Cardiac septum (tissue), 1 donor: ENCODE measurements at regions of chr1 and their contacts with region 1.

Region 1: DNA sequence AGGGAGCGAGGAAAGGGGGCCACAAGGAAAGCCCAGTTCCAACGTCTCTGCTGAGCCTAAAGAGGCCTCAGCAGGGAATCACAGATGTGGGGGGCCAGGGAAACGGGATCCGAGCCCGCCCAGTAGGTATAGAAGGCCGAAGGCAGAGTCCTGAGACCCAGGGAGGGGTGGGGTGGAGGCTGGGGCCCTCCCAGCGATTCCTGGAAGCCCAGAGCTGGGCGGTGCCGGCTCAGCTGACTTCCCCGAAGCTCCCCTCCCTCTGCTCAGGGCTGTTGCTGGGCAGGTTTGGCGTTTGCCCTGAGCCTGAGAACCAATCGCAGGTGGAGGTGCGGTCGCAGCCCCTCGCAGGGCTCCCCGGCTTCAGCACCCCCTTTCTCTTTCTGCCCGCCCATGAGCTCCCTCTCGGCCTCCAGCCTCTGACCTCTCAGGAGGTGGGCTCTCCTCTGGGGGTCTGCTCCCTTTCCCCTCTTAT is 12.8 kb downstream of the ADAMTSL4 start:
- DNase-seq: peak; percentile 98

Region 2: GRCh38 chr1:150464422-150464826 is 97.6 kb before region 1 on chr1:
- intact Hi-C with region 1: loop called (anchors 5 kb)
- DNase-seq: no peak

Region 3: GRCh38 chr1:150578965-150579798 is 17.2 kb after region 1 on chr1 and contains the start of gene MCL1:
- intact Hi-C with region 1: loop called (anchors 1 kb)
- DNase-seq: peak; percentile 97
- total RNA-seq, gene MCL1: 145 TPM

Region 4: DNA sequence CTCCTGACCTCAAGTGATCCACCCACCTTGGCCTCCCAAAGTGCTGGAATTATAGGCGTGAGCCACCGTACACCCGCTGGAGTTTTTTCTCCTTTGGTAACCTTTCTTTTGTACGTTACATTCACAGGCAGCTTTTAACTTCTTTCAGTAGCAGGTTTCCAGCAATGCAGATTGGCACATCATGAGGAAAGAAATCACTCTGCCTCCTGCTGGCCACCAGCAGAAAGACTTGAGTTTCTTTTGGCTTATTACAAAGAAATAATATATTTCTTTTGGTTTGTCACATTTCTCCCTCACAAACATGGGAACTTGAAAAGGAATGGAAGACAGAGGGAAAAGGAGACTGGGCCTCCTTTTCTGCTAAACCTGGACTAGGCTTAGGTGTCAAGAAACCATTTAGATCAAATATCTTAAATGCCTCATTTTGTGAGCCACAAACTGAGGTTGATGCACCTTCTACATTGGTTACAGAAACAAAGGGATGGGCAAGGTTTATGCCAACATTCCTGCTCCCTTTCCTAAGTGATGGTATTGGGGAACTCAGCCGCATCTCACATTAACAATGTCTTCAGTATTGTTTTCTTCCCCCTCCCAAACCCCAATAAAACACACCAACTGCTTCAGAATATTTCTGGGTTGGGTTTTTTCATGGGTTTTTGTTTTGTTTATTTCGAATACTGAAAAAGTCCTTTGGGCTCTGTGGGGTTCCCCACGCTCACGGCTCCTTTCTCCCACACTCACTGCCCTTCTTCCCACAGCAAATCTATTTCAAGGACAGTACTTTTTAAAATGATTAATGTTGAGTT is 59.7 kb after region 1 on chr1:
- intact Hi-C with region 1: loop called (anchors 1 kb)
- DNase-seq: no peak

Region 5: GRCh38 chr1:150629115-150629928 is 67.3 kb after region 1 on chr1 and contains the start of gene ENSA:
- intact Hi-C with region 1: loop called (anchors 1 kb)
- DNase-seq: peak; percentile 99
- total RNA-seq, gene ENSA: 141 TPM

Region 6: DNA sequence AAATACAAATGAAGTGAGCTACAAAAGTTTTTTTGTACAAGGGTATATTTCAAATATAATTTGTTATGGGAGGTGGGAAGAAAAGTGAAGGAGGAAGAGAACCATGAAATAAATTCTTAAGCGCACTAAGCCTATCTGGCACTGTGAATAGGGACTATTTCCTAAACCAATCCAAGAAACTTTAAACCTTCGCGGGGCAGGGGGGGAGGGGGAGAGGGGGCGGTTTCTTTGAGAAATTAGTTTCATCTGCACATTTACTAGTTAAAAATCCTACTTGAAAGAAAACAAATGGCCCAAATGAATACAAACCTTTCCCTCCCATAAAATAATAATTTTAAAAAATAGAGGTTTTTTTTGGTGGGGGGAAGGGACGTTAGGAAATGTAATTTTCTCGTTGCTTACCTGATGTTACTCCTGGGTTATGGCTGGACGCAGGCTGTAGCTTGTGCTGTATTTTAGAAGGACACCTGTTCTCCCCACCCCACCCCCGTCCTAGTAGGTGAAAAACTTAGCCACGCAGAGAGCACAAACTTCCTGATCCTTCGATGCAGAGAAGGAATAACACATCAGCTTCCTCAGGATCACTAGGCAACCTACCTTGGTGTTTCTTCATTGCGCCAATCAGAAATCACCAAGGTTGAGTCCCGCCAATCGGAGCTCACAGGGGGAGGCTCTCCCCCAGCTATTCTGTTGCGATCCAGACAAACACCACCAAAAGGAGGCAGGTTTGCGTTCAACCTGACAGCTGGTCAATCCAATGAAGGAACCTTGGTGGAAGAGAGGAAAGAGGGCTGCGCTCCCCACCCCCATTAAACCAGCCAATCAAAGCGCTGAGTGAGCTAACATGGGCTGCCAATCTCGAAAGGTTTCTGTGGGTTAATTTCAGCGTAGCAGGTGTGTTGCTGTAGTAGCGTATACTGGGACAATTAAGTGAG is 134.8 kb after region 1 on chr1 and contains the start of gene GOLPH3L:
- intact Hi-C with region 1: loop called (anchors 5 kb)
- DNase-seq: peak; percentile 93
- total RNA-seq, gene GOLPH3L: 12.6 TPM